ENCODE measurements at regions of chrX and their contacts with region 1.

Region 1: GRCh38 chrX:75603833-75604232 is 81.0 kb upstream of the ZDHHC15 start:
- DNase-seq: peak in 6 of 9 donors; percentile 4 to 47 (median 32)
- ATAC-seq: no peak
- H3K4me3 ChIP-seq: no peak overlapping the region
- H3K4me3 Mint-ChIP-seq: no peak overlapping the region
- H3K27ac ChIP-seq: no peak overlapping the region
- H3K27ac Mint-ChIP-seq: no peak overlapping the region
- H3K4me1 ChIP-seq: no peaks in the 10 kb centered on the region
- H3K4me1 Mint-ChIP-seq: no peaks in the 10 kb centered on the region
- H3K27me3 ChIP-seq: no peaks in the 10 kb centered on the region
- H3K27me3 Mint-ChIP-seq: no peaks in the 10 kb centered on the region

Region 2: GRCh38 chrX:74492720-74493201 is 1111.1 kb before region 1 on chrX:
- CTCF ChIA-PET with region 1: no interaction called
- POLR2A ChIA-PET with region 1: no interaction called
- intact Hi-C with region 1: loop called in 1 of 2 experiments (anchors 5 kb)
- DNase-seq: peak in 2 of 9 donors; percentile 7 to 12
- ATAC-seq: no peak
- H3K4me3 ChIP-seq: no peak overlapping the region
- H3K4me3 Mint-ChIP-seq: no peak overlapping the region
- H3K27ac ChIP-seq: no peak overlapping the region
- H3K27ac Mint-ChIP-seq: no peak overlapping the region
- H3K4me1 ChIP-seq: no peaks in the 10 kb centered on the region
- H3K4me1 Mint-ChIP-seq: no peaks in the 10 kb centered on the region
- H3K27me3 ChIP-seq: no peaks in the 10 kb centered on the region
- H3K27me3 Mint-ChIP-seq: no peaks in the 10 kb centered on the region

Region 3: GRCh38 chrX:74550295-74550802 is 1053.5 kb before region 1 on chrX:
- CTCF ChIA-PET with region 1: no interaction called
- POLR2A ChIA-PET with region 1: no interaction called
- intact Hi-C with region 1: loop called (anchors 1 to 10 kb)
- DNase-seq: peak; percentile 66 to 86 (median 80)
- ATAC-seq: peak; percentile 100
- H3K4me3 ChIP-seq: peak overlapping the region; percentile 21
- H3K4me3 Mint-ChIP-seq: peak overlapping the region; percentile 21 to 79 (median 76)
- H3K27ac ChIP-seq: no peak overlapping the region
- H3K27ac Mint-ChIP-seq: peak overlapping the region in 7 of 9 donors; percentile 9 to 59 (median 47)
- H3K4me1 ChIP-seq: no peaks in the 10 kb centered on the region
- H3K4me1 Mint-ChIP-seq: peaks cover 0 to 5% (median 3%) of the 10 kb centered on the region in 7 donors
- H3K27me3 ChIP-seq: no peaks in the 10 kb centered on the region
- H3K27me3 Mint-ChIP-seq: no peaks in the 10 kb centered on the region

Region 4: GRCh38 chrX:74835572-74835971 is 768.3 kb before region 1 on chrX:
- CTCF ChIA-PET with region 1: no interaction called
- POLR2A ChIA-PET with region 1: no interaction called
- intact Hi-C with region 1: loop called in 1 of 2 experiments (anchors 10 kb)
- DNase-seq: no peak
- ATAC-seq: no peak
- H3K4me3 ChIP-seq: no peak overlapping the region
- H3K4me3 Mint-ChIP-seq: no peak overlapping the region
- H3K27ac ChIP-seq: no peak overlapping the region
- H3K27ac Mint-ChIP-seq: no peak overlapping the region
- H3K4me1 ChIP-seq: no peaks in the 10 kb centered on the region
- H3K4me1 Mint-ChIP-seq: no peaks in the 10 kb centered on the region
- H3K27me3 ChIP-seq: no peaks in the 10 kb centered on the region
- H3K27me3 Mint-ChIP-seq: peaks cover 0 to 5% (median 0%) of the 10 kb centered on the region in 5 donors

Region 5: DNA sequence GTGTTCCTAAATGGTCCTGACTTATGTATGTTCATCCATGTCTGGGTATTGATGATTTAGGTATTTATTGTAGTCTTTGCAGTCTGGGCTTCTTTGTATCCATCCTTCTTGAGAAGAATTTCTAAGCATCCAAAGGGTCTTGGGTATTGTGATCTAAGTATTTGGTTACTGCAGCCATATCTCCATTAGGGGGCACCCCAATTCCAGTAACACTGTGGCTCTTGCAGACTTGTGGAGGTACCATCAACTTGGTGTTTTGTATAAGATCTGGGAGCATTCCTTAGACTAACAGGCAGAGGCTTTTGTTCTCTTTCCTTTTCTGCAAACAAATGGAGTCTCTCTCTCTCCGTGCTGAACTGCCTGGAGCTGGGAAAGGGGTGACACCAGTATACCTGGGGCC is 564.9 kb before region 1 on chrX:
- CTCF ChIA-PET with region 1: interaction called, 3 read pairs
- POLR2A ChIA-PET with region 1: no interaction called
- intact Hi-C with region 1: loop called (anchors 2 kb)
- DNase-seq: peak in 4 of 9 donors; percentile 0 to 23 (median 6)
- ATAC-seq: no peak
- H3K4me3 ChIP-seq: no peak overlapping the region
- H3K4me3 Mint-ChIP-seq: no peak overlapping the region
- H3K27ac ChIP-seq: no peak overlapping the region
- H3K27ac Mint-ChIP-seq: no peak overlapping the region
- H3K4me1 ChIP-seq: no peaks in the 10 kb centered on the region
- H3K4me1 Mint-ChIP-seq: no peaks in the 10 kb centered on the region
- H3K27me3 ChIP-seq: no peaks in the 10 kb centered on the region
- H3K27me3 Mint-ChIP-seq: no peaks in the 10 kb centered on the region

Measured in naive thymus-derived CD4-positive, alpha-beta T cell (primary cell).